ENCODE measurements at regions of chr10 and their contacts with region 1.

Region 1: GRCh38 chr10:62769574-62770242 is 34.8 kb upstream of the ADO start:
- DNase-seq: no peak
- CTCF ChIP-seq: no peak

Region 2: DNA sequence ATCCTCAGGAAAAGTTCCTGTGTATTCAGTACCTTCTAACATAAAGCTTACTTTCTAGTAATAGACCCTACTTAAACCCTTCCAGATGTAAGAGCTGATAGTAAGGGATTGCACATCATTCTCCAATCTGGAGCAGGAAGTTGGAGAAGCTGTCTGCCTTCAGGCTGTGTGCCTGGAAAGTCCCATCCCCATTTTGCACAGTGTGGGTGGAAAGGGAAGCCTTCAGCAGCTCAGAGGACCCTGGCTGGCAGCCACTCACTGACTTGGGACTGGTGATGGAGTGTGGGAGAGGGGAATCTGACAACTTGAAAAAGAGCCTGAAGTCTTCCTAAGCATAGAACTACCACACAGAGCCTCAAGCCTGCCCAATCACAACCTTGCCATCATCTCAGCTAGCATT is 129.3 kb before region 1 on chr10:
- CTCF ChIA-PET with region 1: no interaction called
- POLR2A ChIA-PET with region 1: no interaction called
- DNase-seq: no peak
- CTCF ChIP-seq: no peak

Region 3: DNA sequence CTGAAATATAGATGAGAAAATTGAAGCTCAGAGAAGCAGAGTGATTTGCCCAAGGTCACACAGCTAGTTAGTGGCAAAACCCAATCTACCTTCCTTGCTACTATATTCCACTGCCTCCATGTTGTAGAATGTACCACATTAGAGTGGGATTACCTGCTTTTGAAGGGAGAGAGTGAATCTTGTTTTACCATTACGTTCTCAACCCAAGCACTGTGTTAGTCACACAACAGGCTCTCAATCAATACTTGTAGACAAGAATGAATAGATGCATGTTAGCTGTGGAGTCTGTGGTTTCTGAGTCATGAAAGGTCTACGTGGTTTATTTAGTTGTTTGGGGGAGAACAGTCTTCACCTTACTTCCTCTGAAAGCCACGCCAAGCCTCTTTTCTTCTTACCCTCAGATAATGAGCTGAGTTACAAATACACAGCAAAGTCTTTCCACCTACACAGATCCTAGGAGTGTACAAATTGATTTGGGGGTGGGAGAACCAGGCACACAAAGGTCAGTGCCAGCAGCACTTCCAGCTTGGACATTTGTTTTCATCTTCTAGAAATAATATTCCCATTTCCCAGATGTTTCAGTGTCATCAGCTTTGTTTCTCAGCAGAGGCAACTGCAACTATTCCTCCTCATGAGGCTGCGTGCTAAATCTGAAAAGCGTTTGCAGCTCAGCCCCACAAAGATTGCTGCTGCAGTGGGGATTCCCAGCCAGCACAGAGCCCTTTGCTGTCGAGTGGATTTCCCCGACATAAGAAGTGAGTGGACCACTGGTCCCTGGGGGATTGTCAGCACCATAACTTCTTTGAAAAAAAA is 36.7 kb before region 1 on chr10:
- CTCF ChIA-PET with region 1: interaction called, 12 read pairs
- POLR2A ChIA-PET with region 1: no interaction called
- DNase-seq: peak; percentile 64
- CTCF ChIP-seq: no peak

Region 4: DNA sequence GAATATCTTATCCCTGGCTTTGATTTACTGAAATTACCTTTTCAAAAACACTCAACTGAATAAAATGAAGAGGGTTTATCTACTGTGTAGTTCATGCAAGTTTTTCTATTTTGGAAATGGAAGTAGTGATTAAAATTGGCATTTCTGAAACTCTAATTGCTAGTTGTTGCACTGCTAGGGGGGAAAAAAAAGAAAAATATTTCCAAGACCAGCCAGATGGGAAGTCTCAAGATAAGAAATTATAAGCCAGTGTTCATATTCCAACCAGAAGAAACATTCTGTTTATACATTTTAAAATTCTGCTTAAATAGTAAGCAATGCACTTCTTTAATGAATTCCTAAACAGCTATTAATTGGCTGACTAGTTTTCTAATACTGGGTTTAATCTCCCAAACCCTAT is 25.4 kb after region 1 on chr10:
- CTCF ChIA-PET with region 1: no interaction called
- POLR2A ChIA-PET with region 1: no interaction called
- DNase-seq: no peak
- CTCF ChIP-seq: no peak

Region 5: DNA sequence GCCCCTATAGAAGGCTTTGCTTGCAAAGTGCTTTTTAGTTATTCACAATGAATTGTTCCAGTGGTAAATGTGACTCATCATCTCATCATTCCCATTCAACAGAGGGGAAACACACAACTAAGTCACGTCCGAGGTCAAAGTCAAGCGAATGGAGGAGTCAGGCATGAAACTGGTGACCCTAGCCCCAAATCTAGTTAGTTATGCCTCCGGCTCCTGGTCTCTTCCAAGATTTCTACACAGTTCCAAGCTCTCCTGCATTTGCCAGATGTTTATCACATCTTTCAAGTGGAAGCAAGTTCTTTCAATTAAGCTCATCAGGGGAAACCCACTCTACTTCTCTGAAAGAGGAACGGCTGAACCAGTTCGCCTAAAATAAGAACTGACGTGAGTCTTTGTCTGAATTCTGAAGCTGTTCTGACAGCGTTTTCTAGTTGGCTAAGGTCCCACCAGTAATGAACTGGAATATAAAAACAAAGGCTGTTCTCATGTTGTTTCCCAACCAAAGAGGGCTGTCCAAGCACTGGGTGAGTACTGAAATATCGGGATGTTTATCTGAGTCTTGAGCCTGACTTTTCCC is 222.5 kb after region 1 on chr10:
- CTCF ChIA-PET with region 1: no interaction called
- POLR2A ChIA-PET with region 1: no interaction called
- DNase-seq: peak; percentile 48
- CTCF ChIP-seq: no peak

Measured in GM10248 (cell line).